AG04450 (cell line): ENCODE measurements at regions of chr6 and their contacts with region 1.

Region 1: GRCh38 chr6:20266851-20267608 is 54.8 kb upstream of the MBOAT1 start:
- DNase-seq: no peak
- H3K4me3 ChIP-seq: no peak overlapping the region
- H3K27ac ChIP-seq: no peak overlapping the region
- H3K27me3 ChIP-seq: peaks cover 3% of the 10 kb centered on the region
- CTCF ChIP-seq: no peak

Region 2: DNA sequence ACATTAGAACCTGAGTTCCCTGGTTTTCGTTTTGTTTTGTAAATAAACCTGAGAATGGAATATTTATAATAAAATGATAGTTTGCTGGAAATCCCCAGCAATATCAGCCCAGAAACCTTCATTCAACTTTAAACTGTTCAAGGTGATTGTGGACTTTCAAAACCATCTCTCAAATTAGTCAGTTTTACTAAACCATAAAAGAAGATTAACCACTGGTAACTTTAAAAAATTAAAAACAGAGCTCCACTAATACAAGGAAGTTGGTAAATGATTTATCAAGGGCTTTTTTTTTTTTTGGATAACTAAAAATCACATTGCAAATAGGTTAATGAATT is 64.7 kb before region 1 on chr6:
- CTCF ChIA-PET with region 1: no interaction called
- POLR2A ChIA-PET with region 1: interaction called, 13 read pairs
- DNase-seq: no peak
- H3K4me3 ChIP-seq: no peak overlapping the region
- H3K27ac ChIP-seq: no peak overlapping the region
- H3K27me3 ChIP-seq: no peaks in the 10 kb centered on the region
- CTCF ChIP-seq: no peak